ENCODE measurements at regions of chr2 and their contacts with region 1.

Region 1: DNA sequence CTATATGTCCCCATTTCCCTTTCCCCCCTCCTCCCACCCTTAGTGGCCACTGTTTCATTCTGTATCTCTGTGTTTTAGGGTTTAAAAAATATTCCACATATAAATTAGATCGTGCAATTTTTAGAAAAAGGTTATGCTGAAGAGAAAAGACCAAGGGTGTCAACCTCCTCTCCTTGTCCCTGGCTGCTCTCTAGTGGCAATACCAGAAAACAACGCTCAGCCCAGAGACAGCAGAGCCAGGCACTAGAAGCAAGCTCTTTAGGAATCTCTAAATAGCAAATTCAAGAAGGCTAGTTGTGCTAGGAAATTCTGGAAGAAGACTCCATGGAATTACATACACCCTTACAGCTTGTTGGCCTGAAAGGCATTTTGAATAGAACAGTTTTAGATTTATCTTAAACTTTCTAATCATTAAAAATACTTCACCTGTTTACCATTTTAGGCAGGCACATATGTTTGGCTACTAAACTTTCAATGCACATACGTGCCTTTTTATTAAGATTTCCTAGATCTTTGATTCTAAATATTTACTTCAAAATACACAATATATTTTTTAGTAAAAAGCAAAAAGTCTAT is 35.1 kb upstream of the RASGRP3 start:
- DNase-seq: no peak
- H3K4me3 ChIP-seq: no peak overlapping the region
- H3K27ac ChIP-seq: peak overlapping the region in 1 of 4 donors; percentile 21
- H3K4me1 ChIP-seq: peaks cover 22 to 48% (median 32%) of the 10 kb centered on the region in 4 donors
- H3K27me3 ChIP-seq: no peaks in the 10 kb centered on the region
- CTCF ChIP-seq: peak; percentile 70 to 83 (median 83)
- EP300 ChIP-seq: no peak
- POLR2A ChIP-seq: no peak

Region 2: GRCh38 chr2:33042265-33042664 is 399.1 kb before region 1 on chr2:
- intact Hi-C with region 1: loop called (anchors 5 kb)
- DNase-seq: no peak
- H3K4me3 ChIP-seq: no peak overlapping the region
- H3K27ac ChIP-seq: peak overlapping the region; percentile 43 to 70 (median 54)
- H3K4me1 ChIP-seq: peaks cover 12 to 42% (median 33%) of the 10 kb centered on the region in 4 donors
- H3K27me3 ChIP-seq: no peaks in the 10 kb centered on the region
- CTCF ChIP-seq: no peak
- EP300 ChIP-seq: no peak
- POLR2A ChIP-seq: no peak

Region 3: DNA sequence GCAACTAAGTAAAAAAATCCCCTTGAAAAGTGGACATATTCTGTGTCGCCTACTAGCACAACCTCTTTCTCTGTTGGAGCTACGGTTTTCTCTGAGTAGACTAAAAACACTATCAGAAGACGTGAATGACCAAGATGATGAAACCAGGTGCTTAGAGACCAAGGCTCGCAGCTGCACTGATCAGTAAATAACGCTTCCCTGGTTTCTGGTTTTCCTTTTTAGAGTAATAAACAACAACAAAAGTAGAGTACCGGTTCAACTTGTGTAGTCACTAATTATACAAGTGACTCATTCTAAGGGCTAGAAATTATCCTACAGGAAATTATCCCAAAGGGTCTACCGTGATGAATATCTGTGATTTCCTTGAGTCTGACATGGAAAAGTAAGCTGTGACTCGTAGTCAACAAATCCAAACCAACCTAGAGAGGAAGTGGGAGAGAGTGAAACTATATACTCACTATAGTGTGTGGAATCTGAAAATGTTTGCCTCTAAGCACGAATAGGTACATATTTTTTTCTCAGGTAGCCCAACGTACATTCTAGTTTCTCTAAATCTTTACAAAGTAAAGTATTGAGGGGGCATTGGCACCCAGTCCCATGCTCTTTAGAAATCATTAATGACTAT is 52.9 kb after region 1 on chr2:
- intact Hi-C with region 1: no loop called
- DNase-seq: no peak
- H3K4me3 ChIP-seq: no peak overlapping the region
- H3K27ac ChIP-seq: no peak overlapping the region
- H3K4me1 ChIP-seq: peaks cover 18 to 31% (median 22%) of the 10 kb centered on the region in 4 donors
- H3K27me3 ChIP-seq: no peaks in the 10 kb centered on the region
- CTCF ChIP-seq: no peak
- EP300 ChIP-seq: no peak
- POLR2A ChIP-seq: no peak

Region 4: GRCh38 chr2:33958591-33958990 is 517.3 kb after region 1 on chr2:
- intact Hi-C with region 1: no loop called
- DNase-seq: no peak
- H3K4me3 ChIP-seq: no peak overlapping the region
- H3K27ac ChIP-seq: no peak overlapping the region
- H3K4me1 ChIP-seq: no peaks in the 10 kb centered on the region
- H3K27me3 ChIP-seq: no peaks in the 10 kb centered on the region
- CTCF ChIP-seq: no peak
- EP300 ChIP-seq: no peak
- POLR2A ChIP-seq: no peak